Activated CD4-positive, alpha-beta memory T cell treated with anti-CD3 and anti-CD28 coated beads, Interleukin-2, amount 10 ng/mL, durations not matched to agents 7 days and 5 days (primary cell): ENCODE measurements at regions of chr6 and their contacts with region 1.

Region 1: DNA sequence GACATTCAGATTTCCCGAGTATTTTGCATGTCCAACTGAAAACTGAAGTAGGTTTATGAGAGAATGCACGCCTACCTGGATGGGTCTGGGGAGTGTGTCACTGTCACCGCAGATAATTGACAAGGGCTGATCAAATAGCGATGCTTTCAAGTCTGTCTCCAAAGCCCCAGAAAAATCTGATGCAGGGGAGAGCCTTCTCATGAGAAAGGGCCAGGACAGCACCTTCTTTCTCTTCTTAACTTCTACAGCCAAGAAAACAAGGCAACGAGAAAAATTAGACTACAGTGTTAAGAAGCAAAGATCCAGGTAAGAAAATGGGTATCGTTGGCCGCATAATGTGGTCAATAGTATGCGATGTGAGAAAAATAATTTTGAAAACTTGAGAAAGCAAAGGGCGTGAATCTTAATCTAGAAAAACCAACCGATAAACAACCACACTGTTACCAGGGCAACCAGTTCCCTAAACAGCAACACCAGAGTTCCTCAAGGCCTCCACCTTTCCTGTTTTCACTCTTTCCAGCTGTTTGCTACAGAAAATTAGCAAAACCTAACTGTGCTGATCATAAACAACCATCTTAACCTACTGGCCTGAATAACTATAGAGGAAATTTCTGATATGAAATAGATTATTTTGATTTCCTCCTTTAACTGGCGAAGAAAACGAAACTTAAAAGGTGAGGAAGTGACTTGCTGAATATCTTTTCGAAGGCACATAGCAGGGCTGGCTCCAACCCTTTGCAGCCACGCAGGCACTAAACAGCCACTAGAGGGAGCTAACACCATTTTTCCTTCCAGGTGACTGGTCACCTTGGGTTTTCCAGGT is 2.6 kb downstream of the TAGAP start:
- DNase-seq: peak; percentile 83
- H3K4me3 Mint-ChIP-seq: peak overlapping the region; percentile 95
- H3K27ac Mint-ChIP-seq: peak overlapping the region; percentile 97
- H3K4me1 Mint-ChIP-seq: peaks cover 66% of the 10 kb centered on the region
- H3K27me3 Mint-ChIP-seq: no peaks in the 10 kb centered on the region

Region 2: GRCh38 chr6:158869826-158870648 is 172.2 kb before region 1 on chr6:
- CTCF ChIA-PET with region 1: interaction called, 3 read pairs
- POLR2A ChIA-PET with region 1: interaction called, 19 read pairs
- DNase-seq: peak; percentile 96
- H3K4me3 Mint-ChIP-seq: peak overlapping the region; percentile 73
- H3K27ac Mint-ChIP-seq: peak overlapping the region; percentile 96
- H3K4me1 Mint-ChIP-seq: peaks cover 33% of the 10 kb centered on the region
- H3K27me3 Mint-ChIP-seq: peaks cover 19% of the 10 kb centered on the region

Region 3: GRCh38 chr6:158991017-158991723 is 51.0 kb before region 1 on chr6:
- CTCF ChIA-PET with region 1: no interaction called
- POLR2A ChIA-PET with region 1: no interaction called
- DNase-seq: no peak
- H3K4me3 Mint-ChIP-seq: no peak overlapping the region
- H3K27ac Mint-ChIP-seq: no peak overlapping the region
- H3K4me1 Mint-ChIP-seq: peaks cover 28% of the 10 kb centered on the region
- H3K27me3 Mint-ChIP-seq: no peaks in the 10 kb centered on the region

Region 4: DNA sequence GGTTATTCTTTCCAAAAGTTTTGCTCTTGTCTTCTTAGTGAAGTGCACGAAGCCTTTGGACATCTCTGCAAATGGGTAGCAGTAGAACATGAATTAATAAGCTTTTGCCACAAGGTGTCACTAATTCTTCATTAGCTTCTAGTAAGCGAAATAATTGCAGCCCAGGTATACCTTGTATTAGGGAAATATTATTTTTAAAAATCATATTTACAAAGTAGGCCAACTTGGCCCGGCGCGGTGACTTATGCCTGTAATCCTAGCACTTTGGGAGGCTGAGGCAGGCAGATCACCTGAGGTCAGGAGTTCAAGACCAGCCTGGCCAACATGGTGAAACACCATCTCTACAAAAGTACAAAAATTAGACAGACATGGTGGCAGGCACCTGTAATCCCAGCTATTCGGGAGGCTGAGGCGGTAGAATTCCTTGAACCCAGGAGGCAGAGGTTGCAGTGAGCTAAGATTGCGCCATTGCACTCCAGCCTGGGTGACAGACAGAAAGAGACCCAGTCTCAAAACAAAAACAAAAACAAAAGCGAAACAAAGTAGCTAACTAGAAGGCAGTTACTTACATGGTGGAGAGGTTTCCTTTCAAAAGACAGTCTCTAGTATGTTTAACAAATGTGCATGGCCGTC is 33.4 kb before region 1 on chr6:
- CTCF ChIA-PET with region 1: interaction called, 48 read pairs
- POLR2A ChIA-PET with region 1: interaction called, 55 read pairs
- DNase-seq: peak; percentile 28
- H3K4me3 Mint-ChIP-seq: peak overlapping the region; percentile 44
- H3K27ac Mint-ChIP-seq: peak overlapping the region; percentile 56
- H3K4me1 Mint-ChIP-seq: peaks cover 42% of the 10 kb centered on the region
- H3K27me3 Mint-ChIP-seq: no peaks in the 10 kb centered on the region

Region 5: GRCh38 chr6:159053781-159054398 is 11.7 kb after region 1 on chr6:
- CTCF ChIA-PET with region 1: interaction called, 10 read pairs
- POLR2A ChIA-PET with region 1: interaction called, 356 read pairs
- DNase-seq: no peak
- H3K4me3 Mint-ChIP-seq: no peak overlapping the region
- H3K27ac Mint-ChIP-seq: no peak overlapping the region
- H3K4me1 Mint-ChIP-seq: peaks cover 42% of the 10 kb centered on the region
- H3K27me3 Mint-ChIP-seq: peaks cover 3% of the 10 kb centered on the region

Region 6: DNA sequence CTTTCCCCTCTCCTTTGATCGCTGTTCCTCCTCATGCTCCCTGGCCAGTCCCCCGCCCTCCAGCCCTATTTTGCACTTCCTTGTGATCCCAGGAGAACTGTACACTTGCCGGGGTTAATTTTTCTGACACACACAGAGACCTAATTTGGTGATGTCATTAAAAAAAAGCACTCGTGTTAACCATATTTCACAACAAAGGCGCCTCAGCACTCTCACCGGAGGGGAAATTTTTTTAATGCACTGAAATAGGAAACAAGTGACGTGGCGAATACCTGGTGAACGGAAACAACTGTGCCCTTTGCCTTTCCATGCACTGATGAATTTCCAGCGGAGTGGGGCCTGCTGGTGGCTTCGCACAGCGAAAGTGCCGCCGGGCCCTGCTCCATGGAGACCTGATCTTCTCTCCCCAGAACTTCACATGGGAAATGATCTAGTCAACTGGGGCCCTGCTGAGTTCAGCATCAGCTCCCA is 56.5 kb after region 1 on chr6:
- CTCF ChIA-PET with region 1: interaction called, 163 read pairs
- POLR2A ChIA-PET with region 1: interaction called, 239 read pairs
- DNase-seq: peak; percentile 61
- H3K4me3 Mint-ChIP-seq: peak overlapping the region; percentile 49
- H3K27ac Mint-ChIP-seq: peak overlapping the region; percentile 73
- H3K4me1 Mint-ChIP-seq: peaks cover 56% of the 10 kb centered on the region
- H3K27me3 Mint-ChIP-seq: no peaks in the 10 kb centered on the region

Region 7: GRCh38 chr6:159110013-159110412 is 67.8 kb after region 1 on chr6:
- CTCF ChIA-PET with region 1: interaction called, 163 read pairs
- POLR2A ChIA-PET with region 1: interaction called, 239 read pairs
- DNase-seq: peak; percentile 41
- H3K4me3 Mint-ChIP-seq: no peak overlapping the region
- H3K27ac Mint-ChIP-seq: no peak overlapping the region
- H3K4me1 Mint-ChIP-seq: peaks cover 57% of the 10 kb centered on the region
- H3K27me3 Mint-ChIP-seq: no peaks in the 10 kb centered on the region